A549 (cell line): ENCODE measurements at regions of chr12 and their contacts with region 1.

Region 1: GRCh38 chr12:111024205-111024801 is 103.9 kb upstream of the MYL2 start:
- DNase-seq: peak; percentile 61 to 85
- ATAC-seq: peak; percentile 90 to 99
- H3K4me3 ChIP-seq: no peak overlapping the region
- H3K27ac ChIP-seq: no peak overlapping the region
- H3K4me1 ChIP-seq: no peaks in the 10 kb centered on the region; the same call in 2 of the 3 replicates
- CTCF ChIP-seq: peak; percentile 90
- EP300 ChIP-seq: no peak
- POLR2A ChIP-seq: no peak
- RAD21 ChIP-seq: peak; percentile 95 to 98

Region 2: GRCh38 chr12:110853836-110854235 is 170.5 kb before region 1 on chr12:
- CTCF ChIA-PET with region 1: no interaction called
- POLR2A ChIA-PET with region 1: no interaction called
- DNase-seq: no peak
- ATAC-seq: no peak
- H3K4me3 ChIP-seq: no peak overlapping the region
- H3K27ac ChIP-seq: no peak overlapping the region
- H3K4me1 ChIP-seq: no peaks in the 10 kb centered on the region
- CTCF ChIP-seq: no peak
- EP300 ChIP-seq: no peak
- POLR2A ChIP-seq: no peak
- RAD21 ChIP-seq: no peak

Region 3: GRCh38 chr12:111006621-111007020 is 17.7 kb before region 1 on chr12:
- CTCF ChIA-PET with region 1: interaction called, 52 read pairs
- POLR2A ChIA-PET with region 1: no interaction called
- DNase-seq: no peak
- ATAC-seq: no peak
- H3K4me3 ChIP-seq: no peak overlapping the region
- H3K27ac ChIP-seq: no peak overlapping the region
- H3K4me1 ChIP-seq: no peaks in the 10 kb centered on the region
- CTCF ChIP-seq: no peak
- EP300 ChIP-seq: no peak
- POLR2A ChIP-seq: no peak
- RAD21 ChIP-seq: no peak

Region 4: DNA sequence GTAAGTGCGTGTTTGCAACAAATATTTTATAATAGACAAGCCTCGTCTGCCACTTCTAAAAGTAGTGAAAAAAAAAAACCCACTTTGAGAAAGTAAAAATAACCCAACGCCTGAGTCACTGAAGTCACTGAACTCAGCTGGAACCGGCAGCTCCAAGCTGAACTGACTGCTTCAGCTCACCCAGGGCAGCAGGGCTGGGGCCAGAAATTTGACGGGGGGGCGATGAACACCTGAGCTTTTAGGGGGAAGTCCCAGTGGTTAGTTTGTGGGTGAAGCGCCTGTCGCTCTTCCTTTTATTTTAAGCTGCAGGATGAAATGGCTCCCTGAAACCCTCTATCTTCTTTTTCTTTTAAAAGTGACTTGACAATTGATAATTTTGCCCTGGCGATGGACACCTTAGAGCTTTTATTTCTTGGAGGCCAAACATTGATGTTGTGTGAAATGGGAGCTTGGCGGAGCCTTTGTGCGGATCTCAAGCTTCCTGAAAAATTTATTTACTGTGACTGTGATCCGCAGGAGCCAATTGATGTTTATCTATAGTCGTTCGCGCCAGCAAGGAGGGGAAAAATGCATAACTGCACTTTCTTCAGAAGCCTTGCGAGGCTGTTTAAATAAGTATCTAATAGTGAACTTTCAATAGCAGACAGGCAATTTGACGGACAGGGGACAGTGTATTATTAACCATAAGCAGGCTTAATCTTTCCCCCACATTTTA is 69.3 kb after region 1 on chr12:
- CTCF ChIA-PET with region 1: interaction called, 13 read pairs
- POLR2A ChIA-PET with region 1: no interaction called
- DNase-seq: no peak
- ATAC-seq: no peak
- H3K4me3 ChIP-seq: no peak overlapping the region
- H3K27ac ChIP-seq: no peak overlapping the region
- H3K4me1 ChIP-seq: no peaks in the 10 kb centered on the region
- CTCF ChIP-seq: no peak
- EP300 ChIP-seq: no peak
- POLR2A ChIP-seq: no peak
- RAD21 ChIP-seq: no peak

Region 5: DNA sequence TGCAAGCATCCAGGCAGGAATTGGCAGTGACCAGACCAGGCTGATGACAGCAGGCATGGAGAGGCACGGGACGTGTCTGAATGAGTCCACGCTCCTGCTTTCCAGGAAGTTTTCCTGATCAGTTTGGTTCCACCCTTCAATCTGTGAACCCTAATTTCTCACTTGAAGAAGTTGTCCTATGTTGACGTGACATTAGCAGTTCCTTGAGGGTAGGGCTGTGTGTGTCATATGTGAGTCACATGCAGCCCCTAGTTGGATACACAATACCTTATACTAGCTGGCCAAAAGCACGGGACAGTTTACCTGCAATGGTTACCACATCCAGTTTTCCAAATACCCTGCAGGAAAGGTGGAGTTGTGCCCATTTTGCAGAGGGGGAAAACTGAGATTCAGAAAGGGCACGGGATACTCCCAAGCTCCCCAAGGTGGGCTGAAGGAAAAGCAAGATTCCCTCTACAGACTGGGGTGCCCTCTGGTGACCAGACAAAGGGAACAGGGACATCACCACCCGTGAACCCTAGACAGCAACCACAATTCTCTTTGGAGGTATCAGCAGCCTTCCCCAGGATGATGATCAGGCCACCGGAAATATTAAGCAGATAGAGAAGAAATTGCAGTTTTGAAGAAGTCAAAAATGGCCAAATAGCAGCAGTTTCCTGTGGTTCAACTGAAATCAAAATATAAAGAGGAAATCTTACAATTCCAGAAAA is 150.1 kb after region 1 on chr12:
- CTCF ChIA-PET with region 1: interaction called, 27 read pairs
- POLR2A ChIA-PET with region 1: no interaction called
- DNase-seq: peak; percentile 27 to 35
- ATAC-seq: peak; percentile 38 to 72; a peak in 2 of 6 replicates
- H3K4me3 ChIP-seq: no peak overlapping the region
- H3K27ac ChIP-seq: no peak overlapping the region
- H3K4me1 ChIP-seq: no peaks in the 10 kb centered on the region
- CTCF ChIP-seq: peak; percentile 48
- EP300 ChIP-seq: no peak
- POLR2A ChIP-seq: no peak
- RAD21 ChIP-seq: peak; percentile 72 to 74

Region 6: DNA sequence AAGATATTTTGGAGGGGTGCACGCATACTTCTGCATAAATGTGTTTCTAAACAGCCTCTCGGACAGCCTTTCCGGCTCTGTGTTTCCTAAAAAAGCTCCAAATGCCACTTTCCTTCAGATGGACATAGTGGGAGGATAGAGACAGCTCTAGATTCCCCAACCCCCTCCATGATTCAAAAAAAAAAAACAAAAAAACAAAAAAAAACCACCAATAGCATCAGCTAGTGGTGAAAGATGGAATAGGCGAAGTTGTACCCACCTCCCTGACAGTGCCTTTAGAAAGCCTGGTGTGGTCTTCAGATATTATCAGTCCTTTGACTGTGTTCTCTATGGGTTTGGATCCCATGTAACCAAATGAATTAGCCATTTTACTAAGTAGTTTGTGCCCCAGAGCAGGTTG is 250.5 kb after region 1 on chr12:
- CTCF ChIA-PET with region 1: interaction called, 37 read pairs
- POLR2A ChIA-PET with region 1: no interaction called
- DNase-seq: peak in 1 of 2 experiments; percentile 63
- ATAC-seq: peak; percentile 55 to 76
- H3K4me3 ChIP-seq: no peak overlapping the region
- H3K27ac ChIP-seq: no peak overlapping the region
- H3K4me1 ChIP-seq: peaks cover 16% of the 10 kb centered on the region; the same call in 1 of the 3 replicates
- CTCF ChIP-seq: peak; percentile 41
- EP300 ChIP-seq: no peak
- POLR2A ChIP-seq: no peak
- RAD21 ChIP-seq: peak in 1 of 2 experiments; percentile 45; a peak in 1 of 5 replicates

Region 7: GRCh38 chr12:111313833-111314259 is 289.5 kb after region 1 on chr12:
- CTCF ChIA-PET with region 1: interaction called, 32 read pairs
- POLR2A ChIA-PET with region 1: no interaction called
- DNase-seq: peak; percentile 76 to 95
- ATAC-seq: peak; percentile 78 to 88
- H3K4me3 ChIP-seq: no peak overlapping the region
- H3K27ac ChIP-seq: no peak overlapping the region
- H3K4me1 ChIP-seq: no peaks in the 10 kb centered on the region
- CTCF ChIP-seq: peak; percentile 87
- EP300 ChIP-seq: no peak
- POLR2A ChIP-seq: no peak
- RAD21 ChIP-seq: peak; percentile 81 to 92